Right ventricle myocardium inferior (tissue), 1 donor: ENCODE measurements at regions of chr14 and their contacts with region 1.

Region 1: DNA sequence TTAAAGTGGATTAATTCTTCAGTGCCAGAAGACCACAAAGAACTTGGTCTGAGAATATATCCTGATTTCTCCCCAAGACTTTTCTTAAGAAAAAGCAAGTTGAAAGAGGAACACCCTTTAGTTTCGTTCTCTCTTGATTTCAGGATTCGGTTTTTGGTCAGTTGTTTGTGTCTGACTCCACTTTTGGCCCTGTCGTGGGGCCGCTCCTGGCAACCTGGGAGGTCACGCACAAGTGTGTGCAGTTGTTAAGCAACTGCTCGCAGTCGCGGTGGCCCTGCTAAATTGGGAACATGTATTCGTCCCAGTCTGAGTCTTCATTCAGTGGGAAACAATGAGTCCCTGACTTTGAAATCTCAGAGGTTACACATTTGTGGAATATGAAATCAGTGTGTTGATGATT is 68.7 kb downstream of the RGS6 start:
- DNase-seq: peak; percentile 82
- ATAC-seq: peak; percentile 86

Region 2: DNA sequence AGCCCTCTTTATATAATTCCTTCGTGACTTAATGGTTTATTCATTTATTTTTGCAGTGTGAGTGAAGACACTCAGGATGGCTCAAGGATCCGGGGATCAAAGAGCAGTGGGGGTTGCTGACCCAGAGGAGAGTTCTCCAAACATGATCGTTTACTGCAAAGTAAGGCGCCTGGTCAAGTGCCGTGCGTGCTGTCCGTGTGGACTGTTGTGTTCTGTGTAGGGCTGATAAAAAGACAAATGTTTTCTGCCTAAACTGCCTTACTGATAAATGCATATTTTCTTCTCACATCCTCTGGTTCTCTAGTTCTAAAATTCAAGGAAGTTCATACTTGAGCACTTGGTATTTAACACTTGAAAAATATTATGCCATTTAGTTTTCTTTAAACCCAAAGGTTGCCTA is 36.2 kb before region 1 on chr14:
- intact Hi-C with region 1: loop called (anchors 1 kb)
- DNase-seq: no peak
- ATAC-seq: no peak